ENCODE measurements at regions of chr20 and their contacts with region 1.

Region 1: DNA sequence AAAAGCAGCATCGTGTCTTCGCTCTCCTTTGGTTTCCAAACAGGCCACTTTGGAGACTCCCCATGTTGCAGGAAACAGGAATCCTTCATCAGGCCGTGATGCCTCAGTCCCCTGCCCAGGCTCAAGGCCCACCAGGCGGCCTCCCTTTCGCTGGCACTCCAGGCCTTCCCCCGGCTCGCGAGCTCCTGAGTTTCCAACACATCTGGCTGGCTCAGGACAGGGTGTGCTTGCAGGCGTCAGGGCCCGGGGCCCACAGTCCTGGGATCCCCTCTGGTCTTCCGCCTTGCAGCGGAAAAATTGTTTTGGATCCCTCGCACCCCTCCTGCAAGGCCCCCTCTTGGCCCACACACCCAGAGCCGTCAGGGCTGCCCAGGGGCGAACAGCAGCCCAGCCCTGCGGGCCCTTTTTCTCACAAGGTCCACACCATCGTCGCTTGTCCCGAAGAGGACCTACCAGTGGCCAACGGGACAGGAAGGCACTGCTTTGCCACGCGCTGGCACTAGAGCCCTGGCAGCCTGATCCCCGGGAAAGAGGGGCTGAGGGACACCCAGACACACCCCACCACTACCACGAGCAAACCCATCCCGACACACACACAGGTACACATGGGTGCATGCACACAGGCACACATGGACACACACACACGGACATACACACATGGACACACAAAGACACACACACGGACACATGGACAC is 1930.9 kb upstream of the DEFB115 start:
- DNase-seq: no peak
- H3K4me3 Mint-ChIP-seq: peak overlapping the region; percentile 8
- H3K27ac Mint-ChIP-seq: peak overlapping the region; percentile 0
- H3K4me1 Mint-ChIP-seq: peaks cover 8% of the 10 kb centered on the region
- H3K27me3 Mint-ChIP-seq: peaks cover 2% of the 10 kb centered on the region

Region 2: GRCh38 chr20:29349836-29350235 is 23.3 kb after region 1 on chr20:
- intact Hi-C with region 1: no loop called
- DNase-seq: no peak
- H3K4me3 Mint-ChIP-seq: no peak overlapping the region
- H3K27ac Mint-ChIP-seq: no peak overlapping the region
- H3K4me1 Mint-ChIP-seq: no peaks in the 10 kb centered on the region
- H3K27me3 Mint-ChIP-seq: no peaks in the 10 kb centered on the region

Region 3: DNA sequence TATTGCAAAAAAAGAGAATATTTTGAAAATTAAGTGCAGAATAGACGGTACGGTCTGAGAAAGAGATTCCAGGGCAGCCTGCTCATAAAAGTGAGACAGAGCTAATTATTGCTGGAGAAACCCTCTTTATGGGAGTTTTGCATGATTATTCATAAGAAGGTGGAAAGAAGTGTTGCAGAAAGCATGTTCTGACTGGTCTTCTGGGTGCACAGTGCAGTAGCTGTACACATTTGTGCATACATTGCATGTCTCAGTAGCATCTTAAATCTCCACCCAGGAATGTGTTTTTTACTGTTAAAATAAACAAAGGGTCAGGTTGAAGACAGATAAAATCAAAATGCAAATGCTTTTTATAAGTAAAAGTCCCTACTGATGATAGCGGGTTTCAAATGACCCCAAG is 117.3 kb after region 1 on chr20:
- intact Hi-C with region 1: no loop called
- DNase-seq: no peak
- H3K4me3 Mint-ChIP-seq: no peak overlapping the region
- H3K27ac Mint-ChIP-seq: no peak overlapping the region
- H3K4me1 Mint-ChIP-seq: no peaks in the 10 kb centered on the region
- H3K27me3 Mint-ChIP-seq: no peaks in the 10 kb centered on the region

Region 4: GRCh38 chr20:30168025-30168799 is 841.7 kb after region 1 on chr20:
- intact Hi-C with region 1: loop called (anchors 5 kb)
- DNase-seq: peak; percentile 7
- H3K4me3 Mint-ChIP-seq: peak overlapping the region; percentile 37
- H3K27ac Mint-ChIP-seq: no peak overlapping the region
- H3K4me1 Mint-ChIP-seq: peaks cover 26% of the 10 kb centered on the region
- H3K27me3 Mint-ChIP-seq: peaks cover 1% of the 10 kb centered on the region